ENCODE measurements at regions of chr10 and their contacts with region 1.

Region 1: GRCh38 chr10:784403-785088 is 95.1 kb upstream of the DIP2C start:
- DNase-seq: peak in 1 of 2 experiments; percentile 57
- H3K4me3 ChIP-seq: peak overlapping the region; percentile 23 to 58 (median 38)
- H3K27ac ChIP-seq: no peak overlapping the region
- H3K4me1 ChIP-seq: peaks cover 0 to 7% (median 1%) of the 10 kb centered on the region in 4 experiments; a peak in 3 of 7 replicates
- H3K27me3 ChIP-seq: peaks cover 2 to 18% (median 8%) of the 10 kb centered on the region in 4 experiments; a peak in 6 of 7 replicates
- CTCF ChIP-seq: peak in 1 of 3 experiments; percentile 6; a peak in 1 of 4 replicates
- EP300 ChIP-seq: no peak
- POLR2A ChIP-seq: no peak
- RAD21 ChIP-seq: peak in 1 of 2 experiments; percentile 23; a peak in 1 of 4 replicates

Region 2: DNA sequence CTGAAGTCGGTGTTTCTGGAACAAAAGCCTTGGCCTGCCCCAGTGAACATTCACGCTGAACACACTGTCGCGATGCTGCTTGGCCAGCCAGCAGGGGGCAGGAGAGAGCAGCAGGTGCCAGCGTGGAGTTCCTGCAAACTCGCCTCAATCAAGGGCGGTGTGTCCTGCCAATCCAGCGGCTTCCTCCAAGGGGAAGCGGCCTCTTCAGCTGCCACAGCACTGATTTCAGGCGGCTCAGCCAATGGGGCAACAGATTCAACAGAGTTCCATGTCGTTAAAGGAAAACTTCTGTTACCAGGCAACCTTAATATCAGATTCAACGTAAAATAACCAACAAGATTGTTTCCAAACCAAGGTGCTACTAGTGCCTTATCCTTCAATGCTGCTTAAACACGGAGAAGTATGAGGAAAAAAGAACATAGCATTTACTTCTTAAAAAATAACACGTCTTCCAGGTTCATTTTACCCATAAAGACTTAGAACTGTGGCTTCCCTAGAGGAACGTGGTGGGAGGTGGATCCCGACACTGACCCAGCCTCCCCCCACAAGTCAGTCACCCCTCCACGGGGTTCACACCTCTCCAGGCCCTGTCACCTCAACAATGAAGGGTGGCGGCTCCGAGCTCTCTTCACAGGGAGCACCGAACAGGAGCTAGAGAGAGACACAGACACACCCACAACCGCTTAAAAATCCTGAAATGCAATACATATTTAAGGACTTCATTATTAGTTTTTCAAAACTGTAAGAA is 273.3 kb before region 1 on chr10:
- CTCF ChIA-PET with region 1: interaction called, 23 read pairs
- POLR2A ChIA-PET with region 1: no interaction called
- DNase-seq: peak; percentile 94 to 97
- H3K4me3 ChIP-seq: no peak overlapping the region
- H3K27ac ChIP-seq: no peak overlapping the region
- H3K4me1 ChIP-seq: no peaks in the 10 kb centered on the region; a peak in 2 of 7 replicates
- H3K27me3 ChIP-seq: peaks cover 23 to 45% (median 38%) of the 10 kb centered on the region in 4 experiments
- CTCF ChIP-seq: peak; percentile 92 to 99 (median 99)
- EP300 ChIP-seq: no peak
- POLR2A ChIP-seq: no peak
- RAD21 ChIP-seq: peak; percentile 89 to 95

Region 3: GRCh38 chr10:772227-772637 is 12.3 kb before region 1 on chr10:
- CTCF ChIA-PET with region 1: interaction called, 11 read pairs
- POLR2A ChIA-PET with region 1: no interaction called
- DNase-seq: peak in 1 of 2 experiments; percentile 49
- H3K4me3 ChIP-seq: no peak overlapping the region
- H3K27ac ChIP-seq: no peak overlapping the region
- H3K4me1 ChIP-seq: peaks cover 0 to 4% (median 0%) of the 10 kb centered on the region in 4 experiments; a peak in 1 of 7 replicates
- H3K27me3 ChIP-seq: no peaks in the 10 kb centered on the region
- CTCF ChIP-seq: no peak
- EP300 ChIP-seq: no peak
- POLR2A ChIP-seq: no peak
- RAD21 ChIP-seq: no peak

Region 4: GRCh38 chr10:804191-804781 is 19.7 kb after region 1 on chr10:
- CTCF ChIA-PET with region 1: interaction called, 10 read pairs
- POLR2A ChIA-PET with region 1: interaction called, 3 read pairs
- DNase-seq: no peak
- H3K4me3 ChIP-seq: no peak overlapping the region
- H3K27ac ChIP-seq: no peak overlapping the region
- H3K4me1 ChIP-seq: peaks cover 0 to 6% (median 0%) of the 10 kb centered on the region in 4 experiments; a peak in 1 of 7 replicates
- H3K27me3 ChIP-seq: no peaks in the 10 kb centered on the region
- CTCF ChIP-seq: no peak
- EP300 ChIP-seq: no peak
- POLR2A ChIP-seq: no peak
- RAD21 ChIP-seq: no peak